Caco-2 (cell line): ENCODE measurements at regions of chr5 and their contacts with region 1.

Region 1: DNA sequence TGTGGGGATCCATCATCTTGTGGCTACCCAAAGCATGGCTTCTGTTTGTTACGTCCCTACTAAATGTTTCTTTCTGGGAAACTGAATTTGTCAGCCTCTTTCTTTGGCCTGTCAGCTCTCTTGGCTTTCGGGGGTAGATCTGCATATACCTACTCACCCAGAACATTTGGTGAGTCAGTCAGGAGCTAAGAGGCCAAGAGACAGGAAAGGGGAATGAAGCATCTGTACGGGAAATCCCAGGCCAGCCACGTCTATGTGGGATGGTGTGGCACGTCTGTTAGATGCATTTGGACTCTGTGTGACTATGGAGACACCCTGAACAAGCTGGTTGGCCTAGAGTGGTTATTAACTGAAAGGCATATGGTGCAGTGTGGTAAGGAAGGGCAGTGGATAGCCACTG is 58.1 kb downstream of the CDO1 start:
- DNase-seq: no peak
- H3K4me3 ChIP-seq: no peak overlapping the region
- H3K4me3 Mint-ChIP-seq: no peak overlapping the region
- H3K27ac Mint-ChIP-seq: no peak overlapping the region
- H3K4me1 ChIP-seq: no peaks in the 10 kb centered on the region
- H3K4me1 Mint-ChIP-seq: no peaks in the 10 kb centered on the region
- H3K27me3 ChIP-seq: no peaks in the 10 kb centered on the region
- H3K27me3 Mint-ChIP-seq: peaks cover 4% of the 10 kb centered on the region
- CTCF ChIP-seq: no peak

Region 2: GRCh38 chr5:115732026-115732425 is 26.3 kb before region 1 on chr5:
- CTCF ChIA-PET with region 1: interaction called, 11 read pairs
- POLR2A ChIA-PET with region 1: no interaction called
- intact Hi-C with region 1: no loop called
- DNase-seq: no peak
- H3K4me3 ChIP-seq: no peak overlapping the region
- H3K4me3 Mint-ChIP-seq: no peak overlapping the region
- H3K27ac Mint-ChIP-seq: no peak overlapping the region
- H3K4me1 ChIP-seq: no peaks in the 10 kb centered on the region
- H3K4me1 Mint-ChIP-seq: no peaks in the 10 kb centered on the region
- H3K27me3 ChIP-seq: no peaks in the 10 kb centered on the region; the same call in 1 of the 2 replicates
- H3K27me3 Mint-ChIP-seq: peaks cover 16% of the 10 kb centered on the region
- CTCF ChIP-seq: no peak

Region 3: GRCh38 chr5:115831163-115831768 is 72.9 kb after region 1 on chr5:
- CTCF ChIA-PET with region 1: no interaction called
- POLR2A ChIA-PET with region 1: no interaction called
- intact Hi-C with region 1: no loop called
- DNase-seq: peak in 1 of 2 experiments; percentile 51
- H3K4me3 ChIP-seq: no peak overlapping the region
- H3K4me3 Mint-ChIP-seq: no peak overlapping the region
- H3K27ac Mint-ChIP-seq: no peak overlapping the region
- H3K4me1 ChIP-seq: no peaks in the 10 kb centered on the region
- H3K4me1 Mint-ChIP-seq: peaks cover 6% of the 10 kb centered on the region
- H3K27me3 ChIP-seq: no peaks in the 10 kb centered on the region
- H3K27me3 Mint-ChIP-seq: no peaks in the 10 kb centered on the region
- CTCF ChIP-seq: peak; percentile 78 to 79